Activated CD4-positive, alpha-beta memory T cell treated with anti-CD3 and anti-CD28 coated beads, Interleukin-2, amount 10 ng/mL, durations not matched to agents 7 days and 5 days (primary cell): ENCODE measurements at regions of chr11 and their contacts with region 1.

Region 1: DNA sequence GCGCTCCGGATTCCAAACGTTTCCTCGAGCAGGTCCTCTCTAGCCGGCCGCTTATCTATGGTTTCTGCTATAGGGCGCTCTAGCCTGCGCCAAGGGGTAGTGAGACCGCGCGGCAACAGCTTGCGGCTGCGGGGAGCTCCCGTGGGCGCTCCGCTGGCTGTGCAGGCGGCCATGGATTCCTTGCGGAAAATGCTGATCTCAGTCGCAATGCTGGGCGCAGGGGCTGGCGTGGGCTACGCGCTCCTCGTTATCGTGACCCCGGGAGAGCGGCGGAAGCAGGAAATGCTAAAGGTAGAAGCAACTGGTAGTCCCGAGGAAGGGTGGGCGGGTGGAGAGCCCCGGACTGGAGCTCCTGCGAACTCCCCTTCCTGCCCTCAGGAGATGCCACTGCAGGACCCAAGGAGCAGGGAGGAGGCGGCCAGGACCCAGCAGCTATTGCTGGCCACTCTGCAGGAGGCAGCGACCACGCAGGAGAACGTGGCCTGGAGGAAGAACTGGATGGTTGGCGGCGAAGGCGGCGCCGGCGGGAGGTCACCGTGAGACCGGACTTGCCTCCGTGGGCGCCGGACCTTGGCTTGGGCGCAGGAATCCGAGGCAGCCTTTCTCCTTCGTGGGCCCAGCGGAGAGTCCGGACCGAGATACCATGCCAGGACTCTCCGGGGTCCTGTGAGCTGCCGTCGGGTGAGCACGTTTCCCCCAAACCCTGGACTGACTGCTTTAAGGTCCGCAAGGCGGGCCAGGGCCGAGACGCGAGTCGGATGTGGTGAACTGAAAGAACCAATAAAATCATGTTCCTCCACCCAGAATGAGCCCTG is at the starts of genes LBHD1 and UQCC3:
- DNase-seq: peak; percentile 91
- H3K4me3 Mint-ChIP-seq: peak within 1 kb of the TSS; percentile 91
- H3K27ac Mint-ChIP-seq: peak within 1 kb of the TSS; percentile 91
- H3K4me1 Mint-ChIP-seq: peaks cover 68% of the 10 kb centered on the region
- H3K27me3 Mint-ChIP-seq: no peaks in the 10 kb centered on the region
- total RNA-seq, gene LBHD1: 17.2 to 18.3 TPM
- total RNA-seq, gene UQCC3: 7.9 to 8.2 TPM

Region 2: GRCh38 chr11:62621567-62622470 is 50.0 kb before region 1 on chr11 and contains the start of gene B3GAT3:
- CTCF ChIA-PET with region 1: interaction called, 3 read pairs
- POLR2A ChIA-PET with region 1: interaction called, 20 read pairs
- DNase-seq: peak; percentile 97
- H3K4me3 Mint-ChIP-seq: peak within 1 kb of the TSS; percentile 87
- H3K27ac Mint-ChIP-seq: peak within 1 kb of the TSS; percentile 98
- H3K4me1 Mint-ChIP-seq: peaks cover 29% of the 10 kb centered on the region
- H3K27me3 Mint-ChIP-seq: no peaks in the 10 kb centered on the region
- total RNA-seq, gene B3GAT3: 58.9 to 67.1 TPM

Region 3: GRCh38 chr11:62652161-62653006 is 19.4 kb before region 1 on chr11:
- CTCF ChIA-PET with region 1: interaction called, 6 read pairs
- POLR2A ChIA-PET with region 1: interaction called, 212 read pairs
- DNase-seq: peak; percentile 47
- H3K4me3 Mint-ChIP-seq: peak overlapping the region; percentile 91
- H3K27ac Mint-ChIP-seq: peak overlapping the region; percentile 85
- H3K4me1 Mint-ChIP-seq: peaks cover 34% of the 10 kb centered on the region
- H3K27me3 Mint-ChIP-seq: no peaks in the 10 kb centered on the region

Region 4: DNA sequence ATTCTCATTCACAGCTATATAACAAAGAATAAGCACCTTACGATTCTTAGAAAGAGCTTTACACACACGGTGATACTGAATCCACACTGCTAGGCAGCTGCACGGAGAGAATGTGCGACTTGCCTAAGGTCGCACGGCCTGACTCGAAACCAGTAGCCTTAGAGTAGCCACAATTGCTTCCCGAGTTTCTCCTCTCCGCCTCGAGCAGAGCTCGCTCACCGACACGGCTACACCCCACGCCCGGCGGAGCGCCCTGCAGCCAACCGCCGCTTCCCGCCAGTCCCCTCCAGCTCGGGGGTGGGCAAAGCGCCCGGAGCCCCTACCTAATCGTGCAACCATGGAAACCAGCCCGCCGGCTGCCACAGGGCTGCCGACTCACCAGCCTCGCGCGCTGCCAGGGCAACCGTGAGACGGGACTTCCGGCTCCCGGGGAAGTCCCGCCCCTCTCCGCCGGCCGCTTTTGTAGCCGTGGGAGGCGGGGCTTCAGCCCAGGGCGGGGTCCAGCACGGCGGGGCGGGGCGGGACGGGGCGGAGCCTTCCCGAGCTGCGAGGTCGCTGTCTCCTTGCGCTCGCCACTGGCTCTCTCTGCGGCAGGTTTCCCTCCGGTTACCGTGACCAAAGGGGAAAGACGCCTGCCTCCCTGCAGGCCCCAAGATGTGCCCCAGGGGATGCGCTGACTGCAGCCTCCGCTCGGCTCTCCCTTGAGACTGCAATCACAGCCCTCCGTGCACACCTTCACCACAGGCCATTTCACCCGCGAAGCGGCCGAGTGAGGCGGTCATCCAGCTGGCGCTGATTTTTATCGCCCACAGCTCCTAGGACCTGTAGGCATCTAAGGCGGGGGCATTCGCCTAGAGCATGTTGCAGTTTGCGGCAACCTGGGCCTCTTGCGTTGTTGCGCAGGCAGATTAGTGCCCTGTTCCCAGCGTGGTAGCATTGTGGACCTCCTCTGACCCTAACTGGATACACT is 34.4 kb after region 1 on chr11:
- CTCF ChIA-PET with region 1: no interaction called
- POLR2A ChIA-PET with region 1: interaction called, 61 read pairs
- DNase-seq: peak; percentile 96
- H3K4me3 Mint-ChIP-seq: peak overlapping the region; percentile 92
- H3K27ac Mint-ChIP-seq: peak overlapping the region; percentile 69
- H3K4me1 Mint-ChIP-seq: peaks cover 56% of the 10 kb centered on the region
- H3K27me3 Mint-ChIP-seq: no peaks in the 10 kb centered on the region

Region 5: GRCh38 chr11:62778441-62778840 is 106.7 kb after region 1 on chr11:
- CTCF ChIA-PET with region 1: no interaction called
- POLR2A ChIA-PET with region 1: no interaction called
- DNase-seq: no peak
- H3K4me3 Mint-ChIP-seq: no peak overlapping the region
- H3K27ac Mint-ChIP-seq: peak overlapping the region; percentile 42
- H3K4me1 Mint-ChIP-seq: peaks cover 13% of the 10 kb centered on the region
- H3K27me3 Mint-ChIP-seq: no peaks in the 10 kb centered on the region

Region 6: GRCh38 chr11:62880803-62881578 is 209.2 kb after region 1 on chr11 and contains the start of gene SLC3A2:
- CTCF ChIA-PET with region 1: interaction called, 3 read pairs
- POLR2A ChIA-PET with region 1: interaction called, 25 read pairs
- DNase-seq: peak; percentile 92
- H3K4me3 Mint-ChIP-seq: peak within 1 kb of the TSS; percentile 99
- H3K27ac Mint-ChIP-seq: peak within 1 kb of the TSS; percentile 100
- H3K4me1 Mint-ChIP-seq: peaks cover 51% of the 10 kb centered on the region
- H3K27me3 Mint-ChIP-seq: no peaks in the 10 kb centered on the region
- total RNA-seq, gene SLC3A2: 262 to 279 TPM